Mammary epithelial cell (primary cell): ENCODE measurements at regions of chr16 and their contacts with region 1.

Region 1: GRCh38 chr16:77288222-77288621 is 89.0 kb downstream of the SYCE1L start:
- DNase-seq: peak; percentile 83
- H3K4me3 ChIP-seq: no peak overlapping the region
- H3K27ac ChIP-seq: peak overlapping the region; percentile 30
- H3K4me1 ChIP-seq: peaks cover 24% of the 10 kb centered on the region
- H3K27me3 ChIP-seq: no peaks in the 10 kb centered on the region
- CTCF ChIP-seq: no peak

Region 2: DNA sequence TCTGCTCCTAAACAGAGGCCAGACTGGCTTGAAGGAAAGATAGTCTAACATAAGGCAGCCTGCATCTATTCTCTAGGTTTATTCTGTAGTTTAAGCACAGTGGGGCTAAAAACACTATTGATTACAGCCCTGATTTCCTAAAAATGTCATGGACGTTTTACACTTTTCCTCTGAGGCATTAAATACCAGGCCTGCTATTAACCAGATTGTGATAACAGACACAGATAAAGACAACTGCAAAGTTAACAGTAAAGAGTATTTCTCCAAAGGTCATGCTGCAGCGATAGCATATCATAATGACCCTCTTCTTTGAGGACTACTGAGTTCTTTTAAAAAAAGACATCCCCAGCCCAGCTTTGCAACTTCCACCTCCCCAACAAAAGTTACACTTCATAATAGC is 156.8 kb before region 1 on chr16:
- CTCF ChIA-PET with region 1: no interaction called
- dilution Hi-C with region 1: no loop called
- in situ Hi-C with region 1: no loop called
- intact Hi-C with region 1: no loop called
- DNase-seq: no peak
- H3K4me3 ChIP-seq: no peak overlapping the region
- H3K27ac ChIP-seq: no peak overlapping the region
- H3K4me1 ChIP-seq: no peaks in the 10 kb centered on the region
- H3K27me3 ChIP-seq: no peaks in the 10 kb centered on the region
- CTCF ChIP-seq: no peak

Region 3: DNA sequence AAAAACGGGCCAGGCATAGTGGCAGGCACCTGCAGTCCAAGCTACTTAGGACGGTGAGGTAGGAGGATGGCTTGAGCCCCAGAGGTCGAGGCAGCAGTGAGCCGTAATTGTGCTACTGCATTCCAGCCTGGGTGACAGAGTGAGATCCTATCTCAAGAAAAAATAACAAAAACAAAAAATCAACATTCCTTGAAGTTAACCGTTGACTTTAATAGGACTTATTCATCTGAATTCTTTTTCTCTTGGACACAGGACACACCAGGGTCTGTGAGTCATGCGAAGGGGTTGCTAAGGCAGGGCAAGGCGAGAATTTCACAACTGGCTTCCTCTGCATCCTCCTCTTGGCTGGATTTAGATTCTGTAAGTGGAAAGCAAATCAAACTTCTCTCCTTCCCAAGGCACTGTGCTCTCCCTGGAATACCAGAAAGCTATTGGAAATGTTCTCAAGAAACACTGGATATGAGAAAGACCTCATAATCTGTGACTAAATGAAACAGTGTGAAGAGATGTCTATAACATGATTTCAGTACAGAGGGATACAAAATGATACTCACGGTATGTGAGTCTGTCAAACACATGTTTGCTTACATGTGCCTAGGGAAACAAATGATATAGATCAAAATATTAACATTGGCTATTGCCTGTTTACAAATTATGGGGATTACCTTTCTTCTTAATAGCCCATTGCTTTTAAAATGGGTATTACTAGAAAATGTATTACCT is 10.6 kb after region 1 on chr16:
- CTCF ChIA-PET with region 1: no interaction called
- dilution Hi-C with region 1: no loop called
- in situ Hi-C with region 1: no loop called
- intact Hi-C with region 1: loop called (anchors 1 kb)
- DNase-seq: peak; percentile 92
- H3K4me3 ChIP-seq: no peak overlapping the region
- H3K27ac ChIP-seq: peak overlapping the region; percentile 67
- H3K4me1 ChIP-seq: peaks cover 20% of the 10 kb centered on the region
- H3K27me3 ChIP-seq: no peaks in the 10 kb centered on the region
- CTCF ChIP-seq: no peak

Region 4: DNA sequence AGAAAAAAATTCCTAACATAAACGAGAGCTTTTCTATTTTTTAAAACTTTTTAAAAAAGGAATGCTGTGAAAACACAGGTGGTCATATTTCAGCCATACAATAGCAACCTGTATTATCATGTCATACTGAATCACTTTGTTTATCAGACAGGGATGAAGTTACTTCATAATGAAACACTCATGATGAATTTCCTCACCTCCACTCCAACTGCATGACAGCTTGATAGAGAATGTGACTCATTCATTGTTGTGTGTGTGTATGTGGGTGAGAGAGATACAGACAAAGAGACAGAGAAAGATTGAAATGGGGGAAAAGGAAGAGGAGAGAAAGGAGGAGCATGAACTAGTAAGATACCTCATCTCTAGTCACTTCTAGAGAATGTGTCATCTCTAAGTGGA is 19.9 kb after region 1 on chr16:
- CTCF ChIA-PET with region 1: no interaction called
- dilution Hi-C with region 1: no loop called
- in situ Hi-C with region 1: no loop called
- intact Hi-C with region 1: loop called (anchors 1 kb)
- DNase-seq: peak; percentile 97
- H3K4me3 ChIP-seq: no peak overlapping the region
- H3K27ac ChIP-seq: peak overlapping the region; percentile 87
- H3K4me1 ChIP-seq: peaks cover 21% of the 10 kb centered on the region
- H3K27me3 ChIP-seq: no peaks in the 10 kb centered on the region
- CTCF ChIP-seq: no peak